B cell (primary cell): ENCODE measurements at regions of chr15 and their contacts with region 1.

Region 1: GRCh38 chr15:40782580-40783227 is 12.9 kb downstream of the C15orf62 start:
- DNase-seq: peak; percentile 84
- ATAC-seq: peak; percentile 98
- H3K4me3 ChIP-seq: no peak overlapping the region
- H3K4me3 Mint-ChIP-seq: no peak overlapping the region
- H3K27ac ChIP-seq: no peak overlapping the region
- H3K27ac Mint-ChIP-seq: peak overlapping the region; percentile 43
- H3K4me1 ChIP-seq: peaks cover 7% of the 10 kb centered on the region in 2 donors
- H3K4me1 Mint-ChIP-seq: peaks cover 16% of the 10 kb centered on the region
- H3K27me3 ChIP-seq: no peaks in the 10 kb centered on the region
- H3K27me3 Mint-ChIP-seq: no peaks in the 10 kb centered on the region
- CTCF ChIP-seq: peak; percentile 90

Region 2: GRCh38 chr15:40684381-40684780 is 98.3 kb before region 1 on chr15:
- CTCF ChIA-PET with region 1: interaction called, 59 read pairs
- POLR2A ChIA-PET with region 1: no interaction called
- intact Hi-C with region 1: no loop called
- DNase-seq: no peak
- ATAC-seq: no peak
- H3K4me3 ChIP-seq: no peak overlapping the region
- H3K4me3 Mint-ChIP-seq: no peak overlapping the region
- H3K27ac ChIP-seq: no peak overlapping the region
- H3K27ac Mint-ChIP-seq: peak overlapping the region; percentile 41
- H3K4me1 ChIP-seq: peaks cover 11 to 15% of the 10 kb centered on the region in 2 donors
- H3K4me1 Mint-ChIP-seq: peaks cover 12% of the 10 kb centered on the region
- H3K27me3 ChIP-seq: no peaks in the 10 kb centered on the region
- H3K27me3 Mint-ChIP-seq: no peaks in the 10 kb centered on the region
- CTCF ChIP-seq: no peak

Region 3: GRCh38 chr15:40702077-40702476 is 80.6 kb before region 1 on chr15:
- CTCF ChIA-PET with region 1: interaction called, 33 read pairs
- POLR2A ChIA-PET with region 1: no interaction called
- intact Hi-C with region 1: loop called (anchors 1 kb)
- DNase-seq: peak; percentile 18
- ATAC-seq: no peak
- H3K4me3 ChIP-seq: no peak overlapping the region
- H3K4me3 Mint-ChIP-seq: no peak overlapping the region
- H3K27ac ChIP-seq: no peak overlapping the region
- H3K27ac Mint-ChIP-seq: no peak overlapping the region
- H3K4me1 ChIP-seq: no peaks in the 10 kb centered on the region
- H3K4me1 Mint-ChIP-seq: no peaks in the 10 kb centered on the region
- H3K27me3 ChIP-seq: no peaks in the 10 kb centered on the region
- H3K27me3 Mint-ChIP-seq: no peaks in the 10 kb centered on the region
- CTCF ChIP-seq: peak; percentile 23

Region 4: GRCh38 chr15:40754883-40755811 is 27.6 kb before region 1 on chr15 and contains the start of gene RMDN3:
- CTCF ChIA-PET with region 1: interaction called, 177 read pairs
- POLR2A ChIA-PET with region 1: interaction called, 3 read pairs
- intact Hi-C with region 1: loop called (anchors 2 kb)
- DNase-seq: peak; percentile 96
- ATAC-seq: peak; percentile 98
- H3K4me3 ChIP-seq: peak within 1 kb of the TSS; percentile 66 to 100 (median 94)
- H3K4me3 Mint-ChIP-seq: peak within 1 kb of the TSS; percentile 93
- H3K27ac ChIP-seq: peak within 1 kb of the TSS; percentile 73 to 89
- H3K27ac Mint-ChIP-seq: peak within 1 kb of the TSS; percentile 93
- H3K4me1 ChIP-seq: peaks cover 8 to 19% of the 10 kb centered on the region in 2 donors
- H3K4me1 Mint-ChIP-seq: peaks cover 23% of the 10 kb centered on the region
- H3K27me3 ChIP-seq: no peaks in the 10 kb centered on the region
- H3K27me3 Mint-ChIP-seq: no peaks in the 10 kb centered on the region
- CTCF ChIP-seq: no peak
- total RNA-seq, gene RMDN3: 22.1 and 24.2 TPM in 2 replicates

Region 5: GRCh38 chr15:40769274-40770146 is 13.2 kb before region 1 on chr15 and contains the start of gene C15orf62:
- CTCF ChIA-PET with region 1: interaction called, 99 read pairs
- POLR2A ChIA-PET with region 1: interaction called, 3 read pairs
- intact Hi-C with region 1: loop called (anchors 1 kb)
- DNase-seq: peak; percentile 85
- ATAC-seq: peak; percentile 82
- H3K4me3 ChIP-seq: peak within 1 kb of the TSS in 4 of 5 experiments; percentile 15 to 52 (median 38)
- H3K4me3 Mint-ChIP-seq: peak within 1 kb of the TSS; percentile 88
- H3K27ac ChIP-seq: peak within 1 kb of the TSS; percentile 42 to 78
- H3K27ac Mint-ChIP-seq: peak within 1 kb of the TSS; percentile 95
- H3K4me1 ChIP-seq: peaks cover 45 to 56% of the 10 kb centered on the region in 2 donors
- H3K4me1 Mint-ChIP-seq: peaks cover 51% of the 10 kb centered on the region
- H3K27me3 ChIP-seq: no peaks in the 10 kb centered on the region
- H3K27me3 Mint-ChIP-seq: no peaks in the 10 kb centered on the region
- CTCF ChIP-seq: no peak
- total RNA-seq, gene C15orf62: 8.6 and 9.5 TPM in 2 replicates

Region 6: DNA sequence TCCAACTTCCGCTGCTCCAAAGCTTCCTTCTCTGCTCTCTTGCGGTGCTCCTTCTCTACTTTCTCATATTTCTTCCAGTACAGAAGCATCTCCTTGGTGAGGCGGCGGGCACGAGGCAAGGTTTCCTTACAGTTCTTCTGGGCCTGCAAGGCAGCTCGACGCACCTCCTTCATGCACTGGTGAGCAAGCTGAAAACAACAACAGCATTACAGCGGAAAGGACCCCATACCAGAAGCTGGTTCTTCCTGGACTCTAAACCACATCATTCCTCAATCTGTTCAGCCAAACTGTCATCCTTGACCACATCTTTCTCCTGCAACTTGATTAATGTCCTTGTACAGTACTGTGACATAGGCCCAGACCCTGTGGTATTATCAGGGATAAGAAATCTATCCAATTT is 297.0 kb after region 1 on chr15:
- CTCF ChIA-PET with region 1: no interaction called
- POLR2A ChIA-PET with region 1: no interaction called
- intact Hi-C with region 1: no loop called
- DNase-seq: peak; percentile 60
- ATAC-seq: peak; percentile 83
- H3K4me3 ChIP-seq: no peak overlapping the region
- H3K4me3 Mint-ChIP-seq: peak overlapping the region; percentile 73
- H3K27ac ChIP-seq: peak overlapping the region; percentile 79 to 84
- H3K27ac Mint-ChIP-seq: peak overlapping the region; percentile 93
- H3K4me1 ChIP-seq: peaks cover 20 to 24% of the 10 kb centered on the region in 2 donors
- H3K4me1 Mint-ChIP-seq: peaks cover 21% of the 10 kb centered on the region
- H3K27me3 ChIP-seq: no peaks in the 10 kb centered on the region
- H3K27me3 Mint-ChIP-seq: no peaks in the 10 kb centered on the region
- CTCF ChIP-seq: no peak